Left cardiac atrium (tissue), 4 donors: ENCODE measurements at regions of chr6 and their contacts with region 1.

Region 1: GRCh38 chr6:145929037-145929633 is 35.0 kb downstream of the SHPRH start:
- DNase-seq: no peak
- ATAC-seq: no peak

Region 2: GRCh38 chr6:146123616-146124015 is 194.5 kb after region 1 on chr6:
- intact Hi-C with region 1: no loop called
- DNase-seq: no peak
- ATAC-seq: no peak

Region 3: DNA sequence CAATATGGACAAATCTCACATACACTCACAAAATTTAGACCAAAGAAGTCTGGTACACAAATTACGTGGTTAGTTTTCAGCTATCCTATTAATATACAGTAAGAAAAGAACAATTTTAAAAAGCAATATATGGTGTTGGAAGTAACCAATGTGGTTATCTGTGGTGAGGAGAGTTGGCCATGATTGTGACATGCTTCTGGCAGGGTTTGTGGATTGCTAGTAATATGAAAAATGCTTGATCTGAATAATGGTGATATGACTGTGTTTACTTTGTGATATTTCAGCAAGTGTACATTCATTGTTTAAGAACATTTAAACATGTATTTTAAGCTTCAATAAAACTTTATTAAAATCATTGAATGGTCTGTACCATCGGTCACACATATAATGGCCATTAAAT is 768.8 kb after region 1 on chr6:
- intact Hi-C with region 1: loop called in 1 of 2 experiments (anchors 10 kb)
- DNase-seq: no peak
- ATAC-seq: no peak